ENCODE measurements at regions of chr13 and their contacts with region 1.

Region 1: DNA sequence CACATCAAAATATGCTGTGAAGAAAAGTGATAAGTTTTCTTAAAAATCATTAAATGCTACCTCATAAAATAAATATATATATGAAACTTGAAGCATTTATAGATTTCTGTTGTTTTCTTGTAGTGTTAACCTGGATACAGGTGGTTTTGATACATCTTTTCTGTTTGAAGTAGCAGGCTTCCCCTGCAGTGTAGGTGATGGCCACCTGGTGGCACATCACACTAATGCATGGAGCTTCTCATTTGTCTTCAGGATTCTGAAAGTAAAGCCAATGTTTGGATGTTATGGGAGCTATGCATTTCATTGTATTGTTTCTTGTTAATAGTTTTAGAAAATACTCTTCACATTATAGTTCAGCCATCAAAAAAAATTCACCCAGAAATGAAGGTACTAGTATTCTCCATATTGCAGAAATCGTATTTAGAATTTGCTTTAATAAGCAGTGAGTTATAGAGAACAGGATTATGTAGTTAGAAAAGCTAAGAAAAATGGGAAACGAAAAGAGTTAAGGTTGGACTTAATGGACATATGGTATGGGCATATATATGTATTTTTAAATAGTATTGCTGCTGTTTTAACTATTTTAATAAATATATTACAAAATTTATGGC is 18.7 kb downstream of the GPR180 start:
- DNase-seq: no peak
- H3K4me3 ChIP-seq: no peak overlapping the region
- H3K27ac ChIP-seq: no peak overlapping the region
- H3K27me3 ChIP-seq: no peaks in the 10 kb centered on the region
- CTCF ChIP-seq: peak; percentile 85

Region 2: GRCh38 chr13:94435604-94436226 is 184.7 kb before region 1 on chr13:
- CTCF ChIA-PET with region 1: interaction called, 232 read pairs
- POLR2A ChIA-PET with region 1: no interaction called
- DNase-seq: peak; percentile 11
- H3K4me3 ChIP-seq: no peak overlapping the region
- H3K27ac ChIP-seq: no peak overlapping the region
- H3K27me3 ChIP-seq: peaks cover 9% of the 10 kb centered on the region
- CTCF ChIP-seq: peak; percentile 70

Region 3: GRCh38 chr13:94601446-94602431 is 18.7 kb before region 1 on chr13 and contains the start of gene GPR180:
- CTCF ChIA-PET with region 1: interaction called, 67 read pairs
- POLR2A ChIA-PET with region 1: no interaction called
- DNase-seq: peak; percentile 99
- H3K4me3 ChIP-seq: peak within 1 kb of the TSS; percentile 89
- H3K27ac ChIP-seq: peak within 1 kb of the TSS; percentile 57
- H3K27me3 ChIP-seq: no peaks in the 10 kb centered on the region
- CTCF ChIP-seq: no peak
- polyA plus RNA-seq, gene GPR180: 5.8 and 8.6 TPM in 2 replicates

Region 4: GRCh38 chr13:94632227-94632980 is 12.0 kb after region 1 on chr13:
- CTCF ChIA-PET with region 1: interaction called, 35 read pairs
- POLR2A ChIA-PET with region 1: no interaction called
- DNase-seq: no peak
- H3K4me3 ChIP-seq: no peak overlapping the region
- H3K27ac ChIP-seq: no peak overlapping the region
- H3K27me3 ChIP-seq: no peaks in the 10 kb centered on the region
- CTCF ChIP-seq: no peak

Region 5: DNA sequence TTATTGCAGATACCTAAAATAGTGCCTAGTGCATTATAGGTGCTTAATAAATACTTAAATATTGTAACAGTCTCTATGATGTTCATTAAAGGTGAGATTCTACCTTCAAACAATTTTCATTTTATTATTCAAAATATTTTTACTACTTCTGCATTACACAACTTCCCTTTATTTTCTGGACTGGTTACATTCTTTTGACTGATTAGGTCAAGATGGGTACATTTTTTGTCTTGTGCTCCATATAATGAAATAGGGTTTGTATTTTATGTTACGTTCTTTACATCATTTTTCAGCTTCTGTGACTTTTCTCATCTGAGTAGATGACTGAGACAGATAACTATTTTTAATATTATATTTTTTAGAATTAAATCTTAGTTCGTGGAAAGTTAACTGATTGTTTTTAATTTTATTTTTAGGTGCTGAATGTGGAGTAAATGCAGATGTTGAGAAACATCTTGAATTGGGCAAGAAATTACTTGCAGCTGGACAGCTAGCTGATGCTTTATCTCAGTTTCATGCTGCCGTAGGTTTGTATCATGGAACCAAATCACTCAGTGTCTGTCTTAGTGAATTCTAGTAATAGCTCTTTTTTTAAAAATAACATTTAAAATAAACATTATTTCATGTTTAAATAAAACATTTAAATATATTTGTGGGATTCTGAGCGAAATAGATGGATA is 1088.6 kb after region 1 on chr13:
- CTCF ChIA-PET with region 1: interaction called, 11 read pairs
- POLR2A ChIA-PET with region 1: no interaction called
- DNase-seq: no peak
- H3K4me3 ChIP-seq: no peak overlapping the region
- H3K27ac ChIP-seq: no peak overlapping the region
- H3K27me3 ChIP-seq: no peaks in the 10 kb centered on the region
- CTCF ChIP-seq: no peak

Measured in AG04450 (cell line).